ENCODE measurements at regions of chr12 and their contacts with region 1.

Region 1: DNA sequence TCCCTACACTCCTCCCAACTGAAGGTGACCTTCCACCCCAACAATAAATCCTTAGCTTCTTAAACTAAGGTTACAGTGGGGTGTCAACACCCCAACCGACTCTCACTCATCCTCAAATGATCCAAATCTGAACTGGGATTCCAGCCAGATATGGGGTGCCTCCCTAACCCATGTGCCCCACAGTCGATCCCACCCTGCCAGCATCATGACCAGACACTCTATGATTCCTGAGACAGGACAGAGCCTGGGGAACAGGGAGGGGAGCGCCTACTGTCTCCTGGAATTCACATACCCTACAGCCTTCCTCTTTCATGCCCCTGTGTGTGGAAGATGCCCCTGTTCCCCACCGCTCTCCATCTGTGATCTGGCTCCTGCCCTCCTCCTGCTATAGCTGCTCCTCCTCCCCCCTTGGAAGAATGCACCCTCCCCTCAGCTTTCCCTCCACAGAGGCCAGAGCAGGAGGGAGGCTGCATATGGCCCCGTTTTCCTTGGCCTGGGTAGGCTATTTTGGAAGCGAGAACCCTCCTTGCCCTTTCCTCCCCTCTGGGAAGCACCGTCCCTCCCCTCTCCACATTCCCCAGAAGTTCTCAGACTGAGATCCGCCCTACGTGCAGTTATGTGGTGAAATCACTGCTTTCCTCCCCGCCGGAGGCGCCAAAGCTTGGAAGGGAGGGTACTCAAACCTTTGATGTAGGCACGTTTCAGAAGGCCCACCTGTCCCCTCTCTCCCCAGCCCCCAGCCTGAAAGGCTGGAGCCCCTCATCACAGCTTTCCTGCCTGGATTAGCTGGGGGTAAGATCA is 48.0 kb downstream of the SMUG1 start:
- DNase-seq: no peak
- H3K4me3 ChIP-seq: no peak overlapping the region
- H3K27ac ChIP-seq: no peak overlapping the region
- H3K4me1 ChIP-seq: peaks cover 0 to 9% (median 2%) of the 10 kb centered on the region in 4 experiments; a peak in 3 of 7 replicates
- H3K27me3 ChIP-seq: peaks cover under 1 to 57% (median 26%) of the 10 kb centered on the region in 4 experiments
- CTCF ChIP-seq: no peak
- EP300 ChIP-seq: no peak
- POLR2A ChIP-seq: no peak
- RAD21 ChIP-seq: no peak

Region 2: GRCh38 chr12:54129028-54129903 is 11.5 kb before region 1 on chr12:
- CTCF ChIA-PET with region 1: interaction called, 17 read pairs
- POLR2A ChIA-PET with region 1: no interaction called
- DNase-seq: no peak
- H3K4me3 ChIP-seq: no peak overlapping the region
- H3K27ac ChIP-seq: no peak overlapping the region
- H3K4me1 ChIP-seq: peaks cover 3 to 20% (median 15%) of the 10 kb centered on the region in 4 experiments
- H3K27me3 ChIP-seq: peaks cover 61 to 98% (median 92%) of the 10 kb centered on the region in 4 experiments
- CTCF ChIP-seq: no peak
- EP300 ChIP-seq: no peak
- POLR2A ChIP-seq: no peak
- RAD21 ChIP-seq: no peak

Region 3: GRCh38 chr12:54159140-54159539 is 18.4 kb after region 1 on chr12:
- CTCF ChIA-PET with region 1: interaction called, 242 read pairs
- POLR2A ChIA-PET with region 1: no interaction called
- DNase-seq: peak; percentile 61 to 88
- H3K4me3 ChIP-seq: peak overlapping the region in 1 of 4 experiments; percentile 26; a peak in 1 of 8 replicates
- H3K27ac ChIP-seq: no peak overlapping the region
- H3K4me1 ChIP-seq: peaks cover 0 to 19% (median 13%) of the 10 kb centered on the region in 4 experiments; a peak in 6 of 7 replicates
- H3K27me3 ChIP-seq: peaks cover 0 to 16% (median 8%) of the 10 kb centered on the region in 4 experiments; a peak in 5 of 7 replicates
- CTCF ChIP-seq: peak; percentile 33 to 62 (median 57); a peak in 3 of 4 replicates
- EP300 ChIP-seq: no peak
- POLR2A ChIP-seq: no peak
- RAD21 ChIP-seq: peak; percentile 5 to 29; a peak in 2 of 4 replicates

Region 4: DNA sequence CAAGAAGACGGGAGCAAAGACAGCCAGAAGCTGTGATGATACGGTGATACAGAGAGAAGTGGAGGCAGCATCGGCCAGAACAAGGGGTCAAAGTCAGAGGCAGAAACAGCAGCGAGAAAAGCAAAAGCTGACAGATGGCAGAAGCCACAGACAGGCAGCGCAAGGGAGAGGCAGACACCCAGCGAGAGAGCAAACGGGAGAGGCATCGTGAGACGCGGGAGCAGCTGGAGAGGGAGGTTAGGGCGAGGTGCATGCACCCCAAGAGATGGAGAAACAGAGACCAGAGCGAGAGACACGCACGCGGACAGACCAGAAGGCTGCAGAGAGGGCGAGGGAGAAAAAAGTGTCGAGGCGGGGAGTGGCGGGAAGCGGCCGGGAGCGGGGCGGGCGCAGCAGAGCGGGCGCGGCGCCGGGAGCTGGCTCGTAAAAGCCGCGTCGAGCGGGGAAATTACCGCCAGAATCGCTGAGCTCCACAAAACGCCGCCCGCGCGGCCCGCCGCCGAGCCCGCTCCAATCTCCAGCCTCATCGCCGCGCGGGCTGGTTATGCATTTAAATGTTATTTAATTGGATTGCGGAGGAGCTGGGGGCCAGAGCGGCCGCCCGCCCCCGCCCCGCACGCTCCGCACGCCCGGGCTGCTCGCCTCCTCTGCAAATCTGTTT is 32.4 kb after region 1 on chr12:
- CTCF ChIA-PET with region 1: interaction called, 16 read pairs
- POLR2A ChIA-PET with region 1: interaction called, 4 read pairs
- DNase-seq: peak in 1 of 2 experiments; percentile 66
- H3K4me3 ChIP-seq: peak overlapping the region; percentile 34 to 58 (median 42); a peak in 5 of 8 replicates
- H3K27ac ChIP-seq: no peak overlapping the region
- H3K4me1 ChIP-seq: peaks cover 0 to 8% (median 3%) of the 10 kb centered on the region in 4 experiments; a peak in 4 of 7 replicates
- H3K27me3 ChIP-seq: peaks cover 42 to 57% (median 51%) of the 10 kb centered on the region in 4 experiments
- CTCF ChIP-seq: no peak
- EP300 ChIP-seq: no peak
- POLR2A ChIP-seq: no peak
- RAD21 ChIP-seq: no peak